ENCODE measurements at regions of chr1 and their contacts with region 1.

Region 1: DNA sequence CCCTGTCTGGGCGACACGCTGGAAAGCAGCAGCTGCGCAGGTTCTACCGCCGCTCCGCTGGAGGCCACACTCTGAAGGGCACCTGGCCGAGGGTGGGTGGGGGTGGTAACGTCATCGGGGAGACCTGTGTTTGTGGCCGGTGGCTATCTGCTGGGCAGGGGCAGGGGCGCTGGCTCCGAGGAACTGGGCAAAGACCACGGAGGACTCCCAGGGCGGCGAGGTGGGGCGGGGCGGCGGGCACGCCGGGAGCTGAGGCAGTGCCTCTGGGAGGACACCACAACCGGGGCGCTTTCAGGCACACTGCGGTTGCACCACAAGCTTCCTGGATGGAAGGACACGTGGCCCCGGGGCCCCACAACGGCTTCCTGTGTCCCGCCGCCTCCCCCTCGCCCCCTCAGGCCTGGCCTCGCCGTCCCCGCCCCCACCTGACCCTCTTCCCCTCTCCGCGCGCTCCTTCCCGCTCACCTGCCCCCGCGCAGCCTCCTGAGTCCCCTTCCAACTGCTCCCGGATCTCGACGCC is 3.3 kb upstream of the DENND2D start:
- DNase-seq: peak; percentile 90
- ATAC-seq: peak; percentile 56
- H3K4me3 ChIP-seq: peak overlapping the region; percentile 60 to 87 (median 83)
- H3K4me3 Mint-ChIP-seq: peak overlapping the region; percentile 91
- H3K27ac ChIP-seq: peak overlapping the region; percentile 88 to 96
- H3K27ac Mint-ChIP-seq: peak overlapping the region; percentile 96
- H3K4me1 ChIP-seq: peaks cover 58 to 75% of the 10 kb centered on the region in 2 donors
- H3K4me1 Mint-ChIP-seq: peaks cover 81% of the 10 kb centered on the region
- H3K27me3 ChIP-seq: no peaks in the 10 kb centered on the region
- H3K27me3 Mint-ChIP-seq: no peaks in the 10 kb centered on the region
- CTCF ChIP-seq: no peak

Region 2: GRCh38 chr1:110963691-110964399 is 239.9 kb before region 1 on chr1 and contains the start of gene LRIF1:
- CTCF ChIA-PET with region 1: no interaction called
- POLR2A ChIA-PET with region 1: no interaction called
- intact Hi-C with region 1: loop called (anchors 5 kb)
- DNase-seq: peak; percentile 100
- ATAC-seq: peak; percentile 96
- H3K4me3 ChIP-seq: peak within 1 kb of the TSS; percentile 62 to 98 (median 82)
- H3K4me3 Mint-ChIP-seq: peak within 1 kb of the TSS; percentile 83
- H3K27ac ChIP-seq: peak within 1 kb of the TSS; percentile 95 to 98
- H3K27ac Mint-ChIP-seq: peak within 1 kb of the TSS; percentile 88
- H3K4me1 ChIP-seq: peaks cover 20 to 21% of the 10 kb centered on the region in 2 donors
- H3K4me1 Mint-ChIP-seq: peaks cover 30% of the 10 kb centered on the region
- H3K27me3 ChIP-seq: peaks cover 0 to 13% (median 7%) of the 10 kb centered on the region in 4 experiments
- H3K27me3 Mint-ChIP-seq: peaks cover 10% of the 10 kb centered on the region
- CTCF ChIP-seq: peak; percentile 60
- total RNA-seq, gene LRIF1: 22.6 and 26.5 TPM in 2 replicates

Region 3: DNA sequence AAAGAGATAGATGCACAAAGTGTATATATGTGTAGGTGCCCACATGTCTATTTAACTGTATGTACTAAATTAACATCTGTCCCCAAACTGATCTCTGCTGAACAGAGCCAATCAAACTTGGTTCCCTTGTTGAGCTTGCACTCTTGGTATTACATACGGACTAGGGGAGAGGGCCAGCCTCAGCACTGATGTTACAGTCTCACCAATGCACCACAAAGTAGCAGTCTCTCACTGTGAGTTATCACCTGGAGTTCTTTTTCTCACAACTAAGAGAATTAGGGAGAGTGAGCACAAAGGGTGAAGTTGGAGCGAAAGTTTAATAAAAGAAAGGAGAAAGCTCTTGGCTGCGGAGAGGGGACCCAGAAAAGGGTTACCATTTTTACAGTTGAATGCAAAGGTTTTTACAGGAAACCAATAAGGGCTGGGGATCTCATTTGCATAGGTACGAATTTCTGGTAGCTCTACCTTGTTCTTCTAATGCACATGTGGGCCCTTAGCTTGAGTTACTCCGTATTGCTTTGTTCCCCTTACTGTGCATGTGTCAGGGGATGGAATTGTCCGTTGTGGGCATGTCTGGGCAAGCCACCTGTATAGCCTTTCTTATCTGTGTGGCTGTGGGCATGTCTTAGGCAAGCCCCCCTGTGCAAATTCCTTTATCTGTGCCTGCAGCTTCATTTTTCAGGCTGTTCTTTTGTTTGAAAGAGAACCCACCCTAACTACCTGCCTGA is 10.5 kb after region 1 on chr1:
- CTCF ChIA-PET with region 1: interaction called, 205 read pairs
- POLR2A ChIA-PET with region 1: interaction called, 138 read pairs
- intact Hi-C with region 1: loop called (anchors 1 kb)
- DNase-seq: peak; percentile 61
- ATAC-seq: no peak
- H3K4me3 ChIP-seq: peak overlapping the region in 1 of 5 experiments; percentile 42
- H3K4me3 Mint-ChIP-seq: peak overlapping the region; percentile 59
- H3K27ac ChIP-seq: peak overlapping the region; percentile 81 to 92
- H3K27ac Mint-ChIP-seq: peak overlapping the region; percentile 95
- H3K4me1 ChIP-seq: peaks cover 67 to 75% of the 10 kb centered on the region in 2 donors
- H3K4me1 Mint-ChIP-seq: peaks cover 78% of the 10 kb centered on the region
- H3K27me3 ChIP-seq: no peaks in the 10 kb centered on the region
- H3K27me3 Mint-ChIP-seq: no peaks in the 10 kb centered on the region
- CTCF ChIP-seq: no peak

Region 4: DNA sequence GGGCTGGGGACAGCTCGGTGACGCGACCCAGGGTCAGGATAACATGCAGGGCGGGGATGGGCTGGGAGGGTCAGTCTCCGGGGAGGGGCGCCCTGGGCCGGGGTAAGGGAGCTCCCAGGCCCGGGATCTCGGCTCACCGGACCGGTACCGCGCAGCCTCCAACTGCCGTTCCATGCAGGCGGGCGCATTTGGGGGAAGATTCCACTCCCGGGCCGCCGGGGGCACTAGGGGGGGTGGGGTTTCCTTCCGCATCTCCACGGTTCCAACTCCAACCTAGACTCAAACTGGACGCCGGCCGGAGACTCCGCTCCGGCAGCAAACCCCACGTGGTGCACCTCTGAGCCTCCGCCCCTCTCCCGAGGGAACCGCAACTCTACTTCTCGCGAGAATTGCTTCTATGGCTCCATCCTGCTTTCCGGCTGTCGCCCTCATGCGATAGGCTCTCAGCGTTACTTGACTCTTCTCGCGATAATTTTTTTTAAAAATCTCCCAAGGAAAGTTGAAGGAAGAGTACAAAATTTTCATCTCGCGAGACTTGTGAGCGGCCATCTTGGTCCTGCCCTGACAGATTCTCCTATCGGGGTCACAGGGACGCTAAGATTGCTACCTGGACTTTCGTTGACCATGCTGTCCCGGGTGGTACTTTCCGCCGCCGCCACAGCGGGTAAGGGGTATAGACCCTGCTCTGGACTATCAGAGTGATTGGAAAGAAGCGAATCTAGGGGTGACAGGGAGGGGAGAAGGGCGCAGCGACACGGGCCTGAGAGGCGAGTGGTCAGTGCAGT is 245.4 kb after region 1 on chr1 and contains the starts of genes ATP5PB and WDR77:
- CTCF ChIA-PET with region 1: no interaction called
- POLR2A ChIA-PET with region 1: no interaction called
- intact Hi-C with region 1: loop called (anchors 2 kb)
- DNase-seq: peak; percentile 96
- ATAC-seq: peak; percentile 95
- H3K4me3 ChIP-seq: peak within 1 kb of the TSS; percentile 76 to 94 (median 85)
- H3K4me3 Mint-ChIP-seq: peak within 1 kb of the TSS; percentile 100
- H3K27ac ChIP-seq: peak within 1 kb of the TSS; percentile 60 to 95
- H3K27ac Mint-ChIP-seq: peak within 1 kb of the TSS; percentile 99
- H3K4me1 ChIP-seq: peaks cover 41 to 48% of the 10 kb centered on the region in 2 donors
- H3K4me1 Mint-ChIP-seq: peaks cover 73% of the 10 kb centered on the region
- H3K27me3 ChIP-seq: no peaks in the 10 kb centered on the region
- H3K27me3 Mint-ChIP-seq: no peaks in the 10 kb centered on the region
- CTCF ChIP-seq: no peak
- total RNA-seq, gene ATP5PB: 110 and 113 TPM in 2 replicates
- total RNA-seq, gene WDR77: 40.5 and 41.4 TPM in 2 replicates